Activated CD4-positive, alpha-beta memory T cell treated with anti-CD3 and anti-CD28 coated beads for 36 hours (primary cell): ENCODE measurements at regions of chr2 and their contacts with region 1.

Region 1: DNA sequence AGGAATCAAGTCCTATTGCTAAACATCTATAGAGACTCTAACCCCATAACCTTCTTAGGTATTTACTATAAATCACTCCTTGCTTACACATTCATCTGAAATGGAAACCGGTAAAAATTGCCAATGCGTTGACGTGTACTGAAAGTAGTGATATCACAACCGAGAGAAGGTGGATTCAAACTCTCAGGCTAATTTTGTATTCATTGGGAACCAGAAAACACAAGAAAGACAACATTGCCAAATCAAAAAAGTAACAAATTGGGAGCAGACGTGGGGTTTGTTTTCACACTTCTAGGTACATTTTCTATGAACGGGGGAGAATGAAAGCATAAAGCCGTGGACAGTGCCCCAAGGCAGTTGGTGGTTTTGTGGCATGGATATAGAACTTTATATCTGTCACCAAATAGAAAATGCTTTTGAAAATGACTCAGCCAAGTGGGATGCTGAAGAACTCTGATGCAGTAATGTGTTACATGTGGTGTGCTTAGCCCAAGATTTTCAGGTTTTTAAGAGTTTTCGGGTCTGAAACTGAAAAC is 155.1 kb upstream of the RASGRP3 start:
- DNase-seq: peak; percentile 68
- H3K4me3 Mint-ChIP-seq: no peak overlapping the region
- H3K27ac Mint-ChIP-seq: peak overlapping the region; percentile 82
- H3K4me1 Mint-ChIP-seq: peaks cover 28% of the 10 kb centered on the region
- H3K27me3 Mint-ChIP-seq: peaks cover 19% of the 10 kb centered on the region

Region 2: GRCh38 chr2:32591669-32592463 is 729.4 kb before region 1 on chr2:
- CTCF ChIA-PET with region 1: no interaction called
- POLR2A ChIA-PET with region 1: no interaction called
- intact Hi-C with region 1: loop called (anchors 1 kb)
- DNase-seq: no peak
- H3K4me3 Mint-ChIP-seq: no peak overlapping the region
- H3K27ac Mint-ChIP-seq: peak overlapping the region; percentile 67
- H3K4me1 Mint-ChIP-seq: peaks cover 31% of the 10 kb centered on the region
- H3K27me3 Mint-ChIP-seq: no peaks in the 10 kb centered on the region

Region 3: DNA sequence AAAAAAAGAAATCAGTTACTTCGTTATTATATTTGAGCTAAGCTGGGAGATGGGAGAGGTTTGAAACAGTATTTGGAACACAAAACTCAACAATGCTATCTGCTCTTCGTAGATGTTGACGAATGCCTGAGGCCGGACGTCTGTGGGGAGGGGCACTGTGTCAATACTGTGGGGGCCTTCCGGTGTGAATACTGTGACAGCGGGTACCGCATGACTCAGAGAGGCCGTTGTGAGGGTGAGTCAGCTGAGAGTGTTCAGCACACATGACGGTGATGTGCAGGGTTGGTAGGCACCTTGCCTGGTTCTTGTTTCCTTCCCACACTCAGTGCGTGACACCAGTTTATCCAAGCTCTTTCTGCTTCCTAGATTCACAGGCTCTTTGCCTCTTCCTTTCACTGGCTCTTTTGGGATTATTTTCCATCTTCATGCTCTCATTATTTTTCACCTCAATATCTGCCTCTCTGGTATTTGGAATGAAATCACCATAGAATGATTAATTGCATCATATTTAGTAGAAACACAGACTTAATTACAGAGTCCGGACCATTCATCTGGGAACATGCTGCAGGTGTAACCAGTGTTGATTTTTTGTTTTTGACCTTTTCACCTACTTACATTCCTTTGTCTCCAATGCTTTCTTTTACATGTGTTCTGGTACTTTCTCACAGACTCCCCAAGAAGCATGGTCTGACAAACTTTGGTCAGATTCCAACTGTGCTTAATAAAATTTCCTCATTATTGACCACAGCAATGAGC is 45.4 kb before region 1 on chr2:
- CTCF ChIA-PET with region 1: interaction called, 3 read pairs
- POLR2A ChIA-PET with region 1: no interaction called
- intact Hi-C with region 1: loop called (anchors 1 kb)
- DNase-seq: peak; percentile 67
- H3K4me3 Mint-ChIP-seq: no peak overlapping the region
- H3K27ac Mint-ChIP-seq: no peak overlapping the region
- H3K4me1 Mint-ChIP-seq: peaks cover 7% of the 10 kb centered on the region
- H3K27me3 Mint-ChIP-seq: peaks cover 9% of the 10 kb centered on the region

Region 4: DNA sequence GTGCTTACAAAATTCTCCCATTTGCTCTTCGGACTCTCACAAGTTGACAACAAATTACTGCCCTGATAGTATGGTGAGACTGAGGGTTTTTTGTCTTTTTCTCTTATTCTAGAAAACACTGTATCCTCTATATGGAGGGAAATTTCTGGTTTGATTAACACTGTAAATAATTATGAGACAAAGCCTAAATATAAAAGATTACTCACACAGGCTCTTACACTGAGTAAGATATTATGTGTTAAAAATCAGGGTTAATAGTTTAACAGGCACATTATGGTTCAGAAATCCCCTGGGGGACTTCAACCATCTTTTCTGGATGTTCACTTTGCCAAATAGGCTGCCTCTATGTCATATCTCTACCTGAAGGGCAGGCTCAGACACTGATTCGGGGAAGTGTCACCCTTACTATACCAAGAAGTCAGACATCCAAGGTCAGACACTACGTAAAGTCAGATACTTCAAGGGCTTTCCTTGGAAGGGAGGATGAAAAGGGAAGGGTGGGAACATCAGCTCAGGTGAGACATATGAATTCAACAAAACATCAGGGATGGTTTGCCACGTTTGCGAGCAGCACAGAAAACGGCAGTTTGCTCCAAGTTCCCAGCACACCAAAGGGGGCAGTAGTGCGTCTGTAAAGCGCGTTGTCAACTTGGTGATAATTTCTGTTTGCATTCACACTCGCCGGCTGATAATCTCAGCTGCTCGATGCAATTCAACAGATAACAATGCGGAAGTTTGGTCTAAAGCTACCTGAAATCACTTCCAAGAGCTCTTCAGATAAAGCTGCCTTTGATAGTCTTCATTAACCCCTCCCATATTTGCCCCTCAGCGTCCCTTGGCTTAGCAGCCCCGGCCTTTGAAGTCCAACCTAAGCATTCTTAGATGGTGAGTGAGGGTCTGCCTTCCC is 154.2 kb after region 1 on chr2:
- CTCF ChIA-PET with region 1: no interaction called
- POLR2A ChIA-PET with region 1: no interaction called
- intact Hi-C with region 1: loop called (anchors 1 kb)
- DNase-seq: peak; percentile 85
- H3K4me3 Mint-ChIP-seq: peak overlapping the region; percentile 80
- H3K27ac Mint-ChIP-seq: peak overlapping the region; percentile 86
- H3K4me1 Mint-ChIP-seq: peaks cover 33% of the 10 kb centered on the region
- H3K27me3 Mint-ChIP-seq: no peaks in the 10 kb centered on the region